K562 (cell line): ENCODE measurements at regions of chr7 and their contacts with region 1.

Region 1: DNA sequence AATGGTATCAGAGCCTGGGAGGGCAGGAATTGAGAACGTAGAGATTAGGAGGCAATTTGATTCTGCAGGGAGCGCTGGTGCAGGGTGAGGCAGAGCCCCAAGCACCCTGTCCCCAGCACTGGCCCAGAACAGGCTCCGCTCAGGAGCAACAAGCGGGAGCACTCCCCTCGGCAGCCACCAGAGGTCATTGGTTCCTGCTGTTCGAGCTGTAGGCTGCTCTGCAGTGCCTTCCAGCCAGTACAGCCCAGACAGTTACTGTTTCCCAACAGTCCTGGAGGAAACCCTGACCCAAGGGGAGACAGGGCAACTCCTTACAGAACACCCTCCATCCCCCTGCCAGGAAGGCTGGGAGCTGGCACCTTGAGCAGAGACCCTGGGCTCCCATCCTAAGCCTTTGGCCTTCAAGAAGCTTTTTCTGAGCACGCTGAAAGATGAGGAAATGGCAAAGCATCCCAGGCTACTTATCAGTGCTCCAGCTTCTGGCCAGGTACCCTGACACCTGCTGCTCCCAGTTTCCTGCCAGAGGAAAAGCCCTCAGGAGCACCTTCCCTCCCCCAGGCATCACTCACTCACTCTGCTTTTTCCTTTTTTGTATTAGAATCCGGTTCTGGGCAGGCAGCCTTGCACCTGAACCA is 71.2 kb upstream of the EFCAB10 start:
- DNase-seq: peak; percentile 84 to 88 (median 88)
- ATAC-seq: peak; percentile 97
- H3K4me3 ChIP-seq: no peak overlapping the region
- H3K27ac ChIP-seq: no peak overlapping the region
- H3K4me1 ChIP-seq: peaks cover 16 to 20% of the 10 kb centered on the region in 2 experiments; a peak in 4 of 5 replicates
- H3K27me3 ChIP-seq: no peaks in the 10 kb centered on the region; a peak in 1 of 5 replicates
- CTCF ChIP-seq: peak; percentile 95 to 98 (median 97)
- EP300 ChIP-seq: no peak
- POLR2A ChIP-seq: no peak
- RAD21 ChIP-seq: peak; percentile 88 to 95

Region 2: GRCh38 chr7:105738133-105738532 is 85.7 kb after region 1 on chr7:
- CTCF ChIA-PET with region 1: no interaction called
- POLR2A ChIA-PET with region 1: interaction called, 3 read pairs
- in situ Hi-C with region 1: no loop called
- intact Hi-C with region 1: loop called (anchors 5 kb)
- DNase-seq: no peak
- ATAC-seq: no peak
- H3K4me3 ChIP-seq: no peak overlapping the region
- H3K27ac ChIP-seq: no peak overlapping the region
- H3K4me1 ChIP-seq: no peaks in the 10 kb centered on the region; a peak in 1 of 5 replicates
- H3K27me3 ChIP-seq: peaks cover 10 to 11% of the 10 kb centered on the region in 2 experiments; a peak in 4 of 5 replicates
- CTCF ChIP-seq: peak in 2 of 3 experiments; percentile 12; a peak in 1 of 6 replicates
- EP300 ChIP-seq: no peak
- POLR2A ChIP-seq: no peak
- RAD21 ChIP-seq: no peak

Region 3: DNA sequence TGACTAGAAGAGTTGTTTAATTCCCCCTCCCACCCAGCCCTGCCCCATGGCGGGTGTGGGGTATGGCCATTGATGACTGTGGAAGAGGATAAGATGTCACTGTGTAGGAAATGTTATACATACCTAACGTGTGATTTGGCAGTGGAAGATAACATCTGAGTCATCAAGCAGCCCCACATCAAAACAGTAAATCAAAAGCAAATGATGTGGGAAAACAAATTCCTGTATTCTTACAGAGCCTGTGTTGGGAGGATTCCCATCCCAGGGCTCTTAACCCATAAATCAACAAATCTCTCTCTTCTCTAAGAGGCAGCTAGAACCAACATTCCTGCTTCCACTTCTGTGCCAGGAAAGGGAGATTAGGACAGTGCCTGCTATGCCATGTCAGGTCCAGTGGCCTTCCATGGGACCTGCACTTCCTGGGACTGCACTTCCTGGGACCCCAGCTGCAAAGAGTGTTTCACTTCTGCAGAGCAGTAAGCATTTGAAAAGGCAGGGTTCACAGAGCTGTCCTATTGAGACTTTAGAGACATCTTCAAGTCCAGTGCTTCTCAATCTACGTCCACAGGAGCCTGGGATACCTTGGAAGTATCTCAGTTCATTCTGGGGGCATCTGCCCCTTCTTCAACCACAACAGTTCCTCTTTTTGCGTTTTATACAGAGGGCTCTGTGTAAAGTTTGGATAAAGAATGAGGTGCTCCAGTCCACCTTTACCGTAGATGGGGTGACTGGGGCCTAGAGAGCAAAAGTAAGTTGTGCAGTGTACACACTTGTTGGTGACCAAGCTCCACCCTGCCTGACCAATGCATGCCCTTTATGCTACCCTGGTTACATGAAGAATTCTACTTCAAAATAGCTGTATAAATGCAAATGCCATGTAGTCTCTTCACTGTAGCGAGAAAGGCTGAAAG is 178.2 kb after region 1 on chr7:
- CTCF ChIA-PET with region 1: no interaction called
- POLR2A ChIA-PET with region 1: no interaction called
- in situ Hi-C with region 1: no loop called
- intact Hi-C with region 1: no loop called
- DNase-seq: no peak
- ATAC-seq: no peak
- H3K4me3 ChIP-seq: no peak overlapping the region
- H3K27ac ChIP-seq: no peak overlapping the region
- H3K4me1 ChIP-seq: no peaks in the 10 kb centered on the region
- H3K27me3 ChIP-seq: peaks cover 10 to 17% of the 10 kb centered on the region in 2 experiments; a peak in 4 of 5 replicates
- CTCF ChIP-seq: no peak
- EP300 ChIP-seq: no peak
- POLR2A ChIP-seq: no peak
- RAD21 ChIP-seq: no peak

Region 4: DNA sequence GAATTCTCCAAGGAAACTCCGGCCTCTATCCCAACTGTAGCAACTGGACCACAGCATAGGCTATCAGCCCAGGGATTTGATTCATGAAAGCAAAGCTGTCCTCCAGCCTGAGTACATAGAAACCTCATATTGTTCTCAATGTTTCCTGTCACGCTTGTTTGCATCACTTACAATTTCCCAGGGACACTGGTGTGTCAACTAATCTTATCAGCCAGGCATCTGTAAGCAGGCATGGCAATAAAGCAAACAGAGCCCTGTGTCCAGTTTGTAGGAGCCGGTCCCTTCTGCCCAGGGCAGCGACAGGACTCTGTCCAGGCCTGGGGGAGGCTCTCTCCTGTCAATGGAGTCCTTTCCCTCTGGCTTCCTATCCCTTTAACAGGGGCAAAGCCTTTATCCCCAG is 287.6 kb after region 1 on chr7:
- CTCF ChIA-PET with region 1: no interaction called
- POLR2A ChIA-PET with region 1: no interaction called
- in situ Hi-C with region 1: no loop called
- intact Hi-C with region 1: loop called (anchors 10 kb)
- DNase-seq: no peak
- ATAC-seq: no peak
- H3K4me3 ChIP-seq: no peak overlapping the region
- H3K27ac ChIP-seq: no peak overlapping the region
- H3K4me1 ChIP-seq: no peaks in the 10 kb centered on the region
- H3K27me3 ChIP-seq: peaks cover 16 to 41% of the 10 kb centered on the region in 2 experiments
- CTCF ChIP-seq: no peak
- EP300 ChIP-seq: no peak
- POLR2A ChIP-seq: no peak
- RAD21 ChIP-seq: no peak

Region 5: DNA sequence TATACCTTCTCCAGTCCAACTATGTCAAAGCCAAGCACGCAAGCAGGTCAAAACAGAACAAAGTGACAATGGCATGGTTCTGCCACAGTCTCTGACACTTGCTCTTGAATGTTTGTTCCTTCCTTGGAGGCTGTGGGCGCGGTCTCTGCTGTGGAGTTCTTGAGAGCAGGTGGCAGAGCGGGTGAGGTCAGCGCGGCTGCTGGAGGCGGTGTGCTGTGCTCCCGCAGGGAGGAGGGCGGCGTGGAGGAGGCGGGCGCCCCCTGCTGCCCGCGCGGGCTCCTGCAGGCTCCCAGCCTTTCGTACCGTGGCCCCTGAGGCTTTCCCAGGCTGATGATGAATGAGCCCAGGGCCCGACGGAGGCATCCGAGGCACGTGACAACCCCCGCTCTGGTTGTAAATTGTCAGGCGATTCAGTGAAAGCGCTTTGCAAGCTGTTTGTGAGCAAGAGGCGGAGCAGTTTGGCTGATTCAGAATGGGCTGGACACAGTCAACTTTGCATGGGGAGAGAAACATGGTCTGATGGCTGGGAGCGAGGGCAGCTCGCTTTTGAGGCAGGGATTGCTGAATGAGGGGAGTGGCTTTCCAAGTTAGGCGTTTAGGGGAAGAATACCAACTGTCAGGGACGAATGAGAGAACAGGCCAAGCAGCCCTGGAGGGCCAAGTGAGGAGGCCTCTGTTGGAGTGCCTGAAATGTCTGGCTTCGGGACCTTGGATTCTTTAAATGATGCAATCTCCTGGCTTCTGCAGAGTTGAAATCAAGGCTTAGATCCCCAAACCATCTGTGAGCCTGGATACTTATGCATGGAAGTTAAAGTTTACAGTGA is 357.1 kb after region 1 on chr7:
- CTCF ChIA-PET with region 1: no interaction called
- POLR2A ChIA-PET with region 1: no interaction called
- in situ Hi-C with region 1: no loop called
- intact Hi-C with region 1: loop called (anchors 10 kb)
- DNase-seq: peak; percentile 86 to 98 (median 94)
- ATAC-seq: peak; percentile 100
- H3K4me3 ChIP-seq: no peak overlapping the region
- H3K27ac ChIP-seq: no peak overlapping the region
- H3K4me1 ChIP-seq: peaks cover 9 to 15% of the 10 kb centered on the region in 2 experiments; a peak in 4 of 5 replicates
- H3K27me3 ChIP-seq: peaks cover 0 to 17% of the 10 kb centered on the region in 2 experiments; a peak in 1 of 5 replicates
- CTCF ChIP-seq: peak; percentile 98 to 100 (median 98)
- EP300 ChIP-seq: no peak
- POLR2A ChIP-seq: no peak
- RAD21 ChIP-seq: peak; percentile 89 to 95

Region 6: DNA sequence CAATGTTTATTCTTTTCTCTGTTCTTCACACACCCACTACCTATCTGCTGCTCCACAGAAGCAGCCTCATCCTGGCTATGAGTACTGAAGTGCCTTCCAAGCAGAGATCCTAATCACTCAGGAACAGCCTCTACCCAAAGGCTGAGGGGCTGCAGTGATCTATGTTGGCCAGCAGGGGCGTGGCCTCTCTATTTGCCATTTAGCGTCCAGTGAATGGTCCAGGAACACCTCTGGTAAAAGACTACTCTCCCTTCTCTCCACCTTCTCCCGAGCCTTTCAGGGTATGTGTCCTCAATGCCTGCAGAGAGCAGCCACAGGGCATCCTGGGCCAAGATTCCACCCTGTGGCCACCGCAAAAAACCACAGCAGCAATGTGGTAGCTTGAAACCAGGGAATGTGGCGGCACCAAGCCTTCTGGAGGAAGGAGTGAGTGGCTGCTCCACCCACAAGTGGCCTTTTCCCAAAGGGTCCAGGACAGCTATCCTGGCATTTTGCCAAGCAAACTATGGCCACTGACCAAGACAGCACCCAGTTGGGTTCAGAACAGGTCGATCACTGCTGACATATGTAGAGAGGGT is 388.8 kb after region 1 on chr7:
- CTCF ChIA-PET with region 1: interaction called, 17 read pairs
- POLR2A ChIA-PET with region 1: no interaction called
- in situ Hi-C with region 1: loop called (anchors 5 kb)
- intact Hi-C with region 1: loop called (anchors 1 kb)
- DNase-seq: peak; percentile 87 to 95 (median 93)
- ATAC-seq: peak; percentile 91
- H3K4me3 ChIP-seq: no peak overlapping the region
- H3K27ac ChIP-seq: no peak overlapping the region
- H3K4me1 ChIP-seq: peaks cover 0 to 13% of the 10 kb centered on the region in 2 experiments; a peak in 3 of 5 replicates
- H3K27me3 ChIP-seq: peaks cover 5 to 34% of the 10 kb centered on the region in 2 experiments; a peak in 4 of 5 replicates
- CTCF ChIP-seq: peak; percentile 92 to 98 (median 92)
- EP300 ChIP-seq: no peak
- POLR2A ChIP-seq: no peak
- RAD21 ChIP-seq: peak; percentile 54 to 72

Region 7: DNA sequence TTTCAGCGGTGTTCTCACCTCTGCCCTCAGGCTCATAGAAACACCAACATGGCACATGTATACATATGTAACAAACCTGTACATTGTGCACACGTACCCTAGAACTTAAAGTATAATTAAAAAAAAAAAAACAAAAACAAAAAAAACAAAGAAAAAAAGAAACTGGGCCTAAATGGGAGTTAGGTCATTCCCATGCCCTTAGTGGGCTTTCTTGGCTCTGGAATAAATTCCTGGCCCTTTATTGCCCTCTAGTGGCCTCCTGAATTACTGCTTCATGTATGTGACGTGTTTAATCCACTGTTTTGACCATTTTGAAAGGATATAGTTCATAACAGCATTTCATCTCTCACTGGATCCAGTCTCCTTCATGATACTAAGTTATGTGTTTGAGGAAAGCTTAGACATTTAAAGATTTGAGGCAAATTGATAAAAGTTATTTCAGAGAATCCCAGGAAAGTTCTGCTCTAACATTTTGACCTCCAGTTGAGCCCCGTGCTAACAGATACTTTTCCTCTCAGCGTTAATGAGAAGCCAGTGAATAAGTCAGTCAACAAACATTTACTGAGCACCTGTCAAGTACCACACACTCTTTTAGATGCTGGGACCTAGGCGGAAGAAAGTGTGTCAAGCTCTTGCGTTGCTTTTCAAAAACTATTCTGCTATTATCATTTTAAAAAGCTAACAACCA is 514.3 kb after region 1 on chr7:
- CTCF ChIA-PET with region 1: interaction called, 3 read pairs
- POLR2A ChIA-PET with region 1: no interaction called
- in situ Hi-C with region 1: no loop called
- intact Hi-C with region 1: loop called (anchors 1 kb)
- DNase-seq: peak; percentile 75 to 87 (median 84)
- ATAC-seq: peak; percentile 92
- H3K4me3 ChIP-seq: no peak overlapping the region
- H3K27ac ChIP-seq: no peak overlapping the region
- H3K4me1 ChIP-seq: no peaks in the 10 kb centered on the region
- H3K27me3 ChIP-seq: peaks cover 0 to 18% of the 10 kb centered on the region in 2 experiments; a peak in 2 of 5 replicates
- CTCF ChIP-seq: peak; percentile 79 to 98 (median 92)
- EP300 ChIP-seq: no peak
- POLR2A ChIP-seq: no peak
- RAD21 ChIP-seq: peak; percentile 85 to 92